AG04450 (cell line): ENCODE measurements at regions of chr14 and their contacts with region 1.

Region 1: GRCh38 chr14:76710056-76711010 is 50.9 kb upstream of the VASH1 start:
- DNase-seq: peak; percentile 10
- H3K4me3 ChIP-seq: no peak overlapping the region
- H3K27ac ChIP-seq: no peak overlapping the region
- H3K27me3 ChIP-seq: peaks cover 8% of the 10 kb centered on the region
- CTCF ChIP-seq: peak; percentile 86

Region 2: DNA sequence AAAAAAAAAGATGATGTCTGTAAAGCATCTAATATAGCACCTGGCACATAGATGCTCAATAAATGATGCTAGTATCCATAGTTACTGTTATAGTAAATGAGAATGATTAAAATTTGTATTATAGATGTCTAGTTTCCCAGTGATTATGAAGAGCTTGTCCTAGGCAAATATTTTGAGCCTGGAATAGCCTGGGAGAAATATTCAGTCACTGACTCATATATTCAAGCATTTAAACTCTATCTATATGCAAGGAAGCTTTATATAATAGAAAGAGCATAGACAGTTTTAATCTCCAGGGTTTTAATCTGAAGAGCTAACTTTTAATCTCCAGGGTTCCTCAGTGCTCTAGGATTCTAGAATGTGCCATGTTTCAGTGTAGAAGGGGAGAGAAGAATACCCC is 40.6 kb before region 1 on chr14:
- CTCF ChIA-PET with region 1: no interaction called
- POLR2A ChIA-PET with region 1: no interaction called
- DNase-seq: no peak
- H3K4me3 ChIP-seq: no peak overlapping the region
- H3K27ac ChIP-seq: no peak overlapping the region
- H3K27me3 ChIP-seq: peaks cover 2% of the 10 kb centered on the region
- CTCF ChIP-seq: no peak

Region 3: GRCh38 chr14:76694106-76694505 is 16.2 kb before region 1 on chr14:
- CTCF ChIA-PET with region 1: interaction called, 13 read pairs
- POLR2A ChIA-PET with region 1: no interaction called
- DNase-seq: no peak
- H3K4me3 ChIP-seq: no peak overlapping the region
- H3K27ac ChIP-seq: no peak overlapping the region
- H3K27me3 ChIP-seq: peaks cover 2% of the 10 kb centered on the region
- CTCF ChIP-seq: no peak

Region 4: GRCh38 chr14:76729953-76730505 is 19.7 kb after region 1 on chr14:
- CTCF ChIA-PET with region 1: interaction called, 15 read pairs
- POLR2A ChIA-PET with region 1: no interaction called
- DNase-seq: no peak
- H3K4me3 ChIP-seq: no peak overlapping the region
- H3K27ac ChIP-seq: no peak overlapping the region
- H3K27me3 ChIP-seq: no peaks in the 10 kb centered on the region
- CTCF ChIP-seq: no peak

Region 5: GRCh38 chr14:76773188-76773885 is 63.0 kb after region 1 on chr14:
- CTCF ChIA-PET with region 1: interaction called, 10 read pairs
- POLR2A ChIA-PET with region 1: no interaction called
- DNase-seq: peak; percentile 37
- H3K4me3 ChIP-seq: no peak overlapping the region
- H3K27ac ChIP-seq: peak overlapping the region; percentile 49
- H3K27me3 ChIP-seq: no peaks in the 10 kb centered on the region
- CTCF ChIP-seq: 0 out of 2 replicates have a peak, but pooled peaks have one; percentile 6

Region 6: DNA sequence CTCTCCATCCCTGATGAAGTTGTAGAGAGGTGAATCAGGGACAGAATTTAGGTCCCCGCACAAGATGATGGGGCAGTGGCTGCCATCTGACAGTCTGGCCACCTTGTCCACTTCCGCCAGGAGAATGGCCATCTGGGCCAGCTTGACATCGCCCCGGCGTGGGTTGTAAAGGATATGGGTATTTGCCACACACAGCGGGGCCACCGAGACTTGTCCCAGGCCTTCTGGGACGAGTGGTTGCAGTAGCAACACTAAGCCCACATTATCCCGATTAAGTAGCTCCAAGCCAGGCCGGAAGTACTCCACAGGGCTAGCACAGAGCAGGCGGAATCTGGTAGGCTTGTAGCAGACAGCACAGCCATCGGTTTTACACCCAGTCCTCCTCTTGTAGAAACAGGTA is 96.1 kb after region 1 on chr14:
- CTCF ChIA-PET with region 1: interaction called, 51 read pairs
- POLR2A ChIA-PET with region 1: no interaction called
- DNase-seq: no peak
- H3K4me3 ChIP-seq: no peak overlapping the region
- H3K27ac ChIP-seq: no peak overlapping the region
- H3K27me3 ChIP-seq: no peaks in the 10 kb centered on the region
- CTCF ChIP-seq: no peak

Region 7: GRCh38 chr14:77097700-77098528 is 387.6 kb after region 1 on chr14 and contains the start of gene CIPC:
- CTCF ChIA-PET with region 1: interaction called, 11 read pairs
- POLR2A ChIA-PET with region 1: no interaction called
- DNase-seq: peak; percentile 96
- H3K4me3 ChIP-seq: peak within 1 kb of the TSS; percentile 99
- H3K27ac ChIP-seq: peak within 1 kb of the TSS; percentile 73
- H3K27me3 ChIP-seq: no peaks in the 10 kb centered on the region
- CTCF ChIP-seq: no peak
- polyA plus RNA-seq, gene CIPC: 8.9 and 9.9 TPM in 2 replicates